Activated T-helper 1 cell treated with anti-CD3 and anti-CD28 coated beads, Interleukin-12 subunit alpha, Interleukin-12 subunit beta, Interleukin-2, Interleukin-4 antibody, amounts not matched to agents 30 ng/mL and 10 ng/mL and 1 ng/mL, durations not matched to agents 14 hours and 24 hours and 36 hours (primary cell): ENCODE measurements at regions of chr3 and their contacts with region 1.

Region 1: DNA sequence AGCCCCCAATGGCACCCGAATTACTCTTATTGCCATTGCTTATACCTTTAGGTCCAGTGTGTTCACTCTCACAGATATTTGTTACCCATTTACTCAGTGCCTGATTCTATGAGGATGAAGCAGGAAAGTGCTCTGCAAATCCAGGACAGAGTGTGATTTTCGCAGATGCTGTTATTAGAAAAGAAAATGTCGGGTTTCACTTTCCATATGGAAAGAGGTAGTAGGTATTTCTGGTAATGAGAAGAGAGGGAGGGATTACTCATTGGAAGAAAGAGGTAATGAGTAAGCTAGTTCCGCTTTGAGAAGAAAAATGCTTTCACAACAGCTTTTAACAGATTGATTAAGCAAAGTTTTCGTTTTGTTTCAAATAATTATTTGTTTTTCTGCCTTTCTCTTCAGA is 336.3 kb upstream of the CFAP20DC start:
- DNase-seq: no peak
- H3K4me3 Mint-ChIP-seq: peak overlapping the region; percentile 32
- H3K27ac Mint-ChIP-seq: peak overlapping the region; percentile 97
- H3K4me1 Mint-ChIP-seq: peaks cover 91% of the 10 kb centered on the region
- H3K27me3 Mint-ChIP-seq: no peaks in the 10 kb centered on the region

Region 2: DNA sequence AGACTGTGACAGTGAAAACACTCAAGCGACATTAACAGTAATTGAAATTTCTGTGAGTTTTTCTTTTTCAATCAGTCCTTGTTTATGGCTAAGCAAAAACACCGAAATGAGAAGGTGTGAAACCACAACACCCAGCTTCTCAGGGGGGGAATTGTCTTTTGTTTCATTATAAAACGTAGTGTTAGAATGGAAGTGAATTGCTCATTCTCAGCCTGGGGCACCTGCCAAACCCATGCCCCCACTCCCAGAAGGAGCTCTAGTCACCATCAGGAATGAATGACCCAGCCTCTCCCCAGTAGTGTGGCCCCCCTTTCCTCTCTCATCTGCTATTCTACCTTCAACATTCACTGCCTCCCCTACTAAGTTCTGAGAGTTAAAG is 150.5 kb before region 1 on chr3:
- intact Hi-C with region 1: loop called (anchors 1 kb)
- DNase-seq: peak; percentile 37
- H3K4me3 Mint-ChIP-seq: peak overlapping the region; percentile 58
- H3K27ac Mint-ChIP-seq: peak overlapping the region; percentile 27
- H3K4me1 Mint-ChIP-seq: peaks cover 29% of the 10 kb centered on the region
- H3K27me3 Mint-ChIP-seq: peaks cover 6% of the 10 kb centered on the region

Region 3: DNA sequence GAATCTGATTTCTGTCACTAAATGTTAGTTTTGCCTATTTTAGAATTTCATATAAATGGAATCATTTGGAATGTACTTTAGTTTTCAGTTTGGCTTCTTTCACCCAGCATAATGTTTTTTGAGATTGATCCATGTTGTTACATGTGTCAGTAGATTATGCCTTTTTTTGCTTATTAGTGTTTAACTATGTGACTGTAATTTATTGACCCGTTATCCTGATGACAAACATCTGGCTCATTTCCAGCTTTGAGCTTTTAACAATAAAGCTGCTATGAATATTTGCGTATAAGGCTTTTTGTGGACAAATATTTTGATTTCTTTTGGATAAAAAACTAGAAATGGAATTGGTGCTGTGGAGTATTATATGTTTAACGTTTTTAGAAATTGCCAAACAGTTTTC is 81.9 kb before region 1 on chr3:
- intact Hi-C with region 1: no loop called
- DNase-seq: no peak
- H3K4me3 Mint-ChIP-seq: no peak overlapping the region
- H3K27ac Mint-ChIP-seq: no peak overlapping the region
- H3K4me1 Mint-ChIP-seq: peaks cover 15% of the 10 kb centered on the region
- H3K27me3 Mint-ChIP-seq: peaks cover 6% of the 10 kb centered on the region

Region 4: DNA sequence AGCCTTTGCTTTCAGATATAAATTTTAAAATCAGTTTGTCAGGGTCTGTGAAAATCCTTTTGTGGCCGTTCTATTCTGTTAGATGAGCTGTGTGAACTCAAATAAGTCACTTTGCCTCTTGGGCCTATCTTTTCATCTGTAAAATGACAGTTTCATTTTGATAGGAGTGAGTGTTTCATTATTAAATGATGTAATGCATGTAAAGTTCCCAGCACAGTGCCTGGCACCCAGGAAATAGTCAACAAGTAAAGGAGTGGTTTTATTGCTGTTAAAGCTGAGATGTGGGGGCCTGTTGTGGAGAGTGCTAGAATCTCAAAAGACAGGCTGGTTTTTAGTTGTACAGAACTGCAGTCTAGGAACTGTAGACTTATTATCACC is 58.1 kb after region 1 on chr3:
- intact Hi-C with region 1: loop called (anchors 1 kb)
- DNase-seq: no peak
- H3K4me3 Mint-ChIP-seq: peak overlapping the region; percentile 74
- H3K27ac Mint-ChIP-seq: peak overlapping the region; percentile 94
- H3K4me1 Mint-ChIP-seq: peaks cover 61% of the 10 kb centered on the region
- H3K27me3 Mint-ChIP-seq: no peaks in the 10 kb centered on the region

Region 5: DNA sequence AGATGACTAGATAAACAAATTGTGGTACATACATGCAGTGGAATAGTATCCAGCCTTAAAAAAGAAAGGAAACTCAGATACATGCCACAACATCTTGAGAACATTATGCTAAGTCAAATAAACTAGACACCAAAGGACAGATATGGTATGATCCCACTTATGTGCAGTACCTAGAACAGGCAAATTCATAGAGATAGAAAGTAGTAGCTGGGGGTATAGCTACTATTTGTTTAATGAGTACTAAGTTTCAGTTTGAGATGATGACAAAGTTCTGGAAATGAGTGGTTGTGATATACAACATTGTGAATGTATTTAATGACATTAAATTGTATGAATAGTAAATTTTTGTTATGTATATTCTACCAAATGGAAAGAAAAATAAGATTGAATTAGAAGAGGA is 140.8 kb after region 1 on chr3:
- intact Hi-C with region 1: loop called (anchors 1 kb)
- DNase-seq: no peak
- H3K4me3 Mint-ChIP-seq: no peak overlapping the region
- H3K27ac Mint-ChIP-seq: peak overlapping the region; percentile 19
- H3K4me1 Mint-ChIP-seq: peaks cover 9% of the 10 kb centered on the region
- H3K27me3 Mint-ChIP-seq: no peaks in the 10 kb centered on the region

Region 6: DNA sequence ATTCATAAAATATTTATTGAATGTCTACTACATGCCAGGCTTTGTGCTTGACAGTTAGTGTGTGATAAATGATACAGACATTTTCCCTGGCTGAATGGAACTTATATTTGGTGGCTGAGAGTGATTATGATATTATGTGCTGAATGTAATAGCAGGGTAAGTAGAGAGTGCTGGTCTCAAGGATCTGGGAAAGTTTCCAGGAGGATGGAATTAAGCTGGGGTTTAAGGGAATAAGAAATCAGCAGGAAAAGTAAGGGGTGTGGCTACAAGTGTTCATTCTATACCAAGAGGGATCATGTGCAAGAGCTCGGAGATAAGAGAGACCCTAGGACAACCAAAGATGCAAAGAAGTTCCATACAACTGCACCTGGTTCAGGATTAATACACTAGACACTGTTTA is 163.8 kb after region 1 on chr3:
- intact Hi-C with region 1: no loop called
- DNase-seq: no peak
- H3K4me3 Mint-ChIP-seq: no peak overlapping the region
- H3K27ac Mint-ChIP-seq: no peak overlapping the region
- H3K4me1 Mint-ChIP-seq: no peaks in the 10 kb centered on the region
- H3K27me3 Mint-ChIP-seq: peaks cover 2% of the 10 kb centered on the region

Region 7: DNA sequence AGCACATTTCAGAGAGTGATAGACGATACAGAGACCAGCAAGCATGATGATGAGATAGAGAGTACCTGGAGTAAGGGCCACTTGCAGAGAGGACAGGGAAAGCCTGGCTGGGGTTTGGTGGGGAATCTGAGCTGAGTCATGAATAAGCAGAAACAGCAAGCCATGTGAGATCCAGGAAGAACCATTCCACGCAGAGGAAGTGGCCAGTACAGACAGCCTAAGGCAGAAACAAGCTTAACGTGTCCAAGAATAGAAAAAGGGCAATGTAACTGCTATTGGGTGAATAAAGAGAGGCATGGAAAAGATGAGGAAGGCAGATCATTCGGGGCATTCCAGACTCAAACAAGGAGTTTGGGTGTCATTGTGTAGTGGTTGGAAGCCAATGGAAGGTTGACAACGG is 479.9 kb after region 1 on chr3:
- intact Hi-C with region 1: loop called (anchors 2 kb)
- DNase-seq: no peak
- H3K4me3 Mint-ChIP-seq: no peak overlapping the region
- H3K27ac Mint-ChIP-seq: no peak overlapping the region
- H3K4me1 Mint-ChIP-seq: peaks cover 40% of the 10 kb centered on the region
- H3K27me3 Mint-ChIP-seq: no peaks in the 10 kb centered on the region

Region 8: DNA sequence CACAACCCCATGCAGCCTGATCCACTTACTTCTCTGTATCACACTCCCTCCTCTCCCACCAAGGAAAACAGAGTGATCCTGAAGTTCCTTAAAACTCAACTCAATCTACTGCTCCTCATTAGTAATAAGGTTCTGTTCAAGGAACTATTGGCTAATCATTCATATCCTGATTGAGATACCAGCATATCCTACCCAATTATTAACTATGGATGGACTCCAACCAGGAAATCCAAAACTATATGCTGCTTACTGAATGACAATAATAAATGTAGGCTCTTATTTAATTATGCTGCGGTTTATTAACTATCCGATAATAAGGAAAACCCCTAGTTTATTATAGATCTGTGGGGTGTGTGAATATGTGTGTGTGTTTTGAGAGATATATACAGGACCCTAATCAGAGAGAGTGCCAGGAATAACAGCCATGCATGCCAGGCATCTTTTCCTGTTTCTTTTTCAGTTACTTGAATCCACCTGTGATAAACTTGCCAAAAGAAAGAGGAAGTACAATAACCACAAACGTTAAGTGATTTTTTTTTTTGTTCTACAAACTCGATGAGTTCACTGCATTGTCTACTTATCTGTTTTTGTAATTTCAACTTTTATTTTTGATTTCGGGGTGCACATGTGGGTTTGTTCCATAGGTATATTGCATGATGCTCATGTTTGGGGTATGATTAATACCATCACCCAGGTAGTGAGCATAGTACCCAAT is 695.4 kb after region 1 on chr3:
- intact Hi-C with region 1: loop called (anchors 1 kb)
- DNase-seq: no peak
- H3K4me3 Mint-ChIP-seq: peak overlapping the region; percentile 79
- H3K27ac Mint-ChIP-seq: peak overlapping the region; percentile 95
- H3K4me1 Mint-ChIP-seq: peaks cover 87% of the 10 kb centered on the region
- H3K27me3 Mint-ChIP-seq: no peaks in the 10 kb centered on the region